Heart right ventricle (tissue), 16 donors: ENCODE measurements at regions of chr18 and their contacts with region 1.

Region 1: DNA sequence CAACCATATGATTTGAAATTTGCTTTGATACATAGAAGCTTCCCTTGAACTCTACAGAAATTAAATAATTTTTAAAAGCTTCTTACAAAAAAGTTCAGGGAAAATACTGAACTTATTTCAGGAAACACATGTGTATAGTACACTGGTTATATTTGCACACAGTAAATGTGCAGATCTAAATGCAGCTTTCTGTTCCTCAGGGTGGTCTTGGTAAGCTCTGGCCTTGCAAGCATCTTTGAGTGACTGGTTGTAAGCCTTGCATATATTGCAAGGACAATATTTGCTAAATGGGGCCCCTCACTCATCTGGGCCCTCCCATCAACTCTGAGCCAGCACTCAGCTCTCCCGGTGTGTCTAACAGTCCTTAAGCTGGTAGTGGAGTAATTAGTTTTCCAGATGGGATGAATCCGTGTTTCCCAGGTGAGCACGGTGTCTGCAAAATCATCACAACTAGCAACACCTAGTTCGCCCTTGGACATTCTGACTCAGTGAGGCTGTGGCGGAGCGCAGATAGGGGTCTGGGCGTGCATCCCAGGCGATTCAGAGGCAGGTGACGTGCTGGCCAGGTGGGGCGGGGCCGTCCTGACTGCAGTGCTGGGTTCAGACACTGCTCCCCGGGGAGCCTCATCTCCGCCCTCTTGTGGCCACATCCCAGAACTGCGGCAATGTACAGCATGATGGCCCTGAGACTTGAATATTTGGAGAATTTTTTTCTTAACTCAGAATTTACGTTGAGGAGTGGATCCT is 149.6 kb downstream of the MBP start:
- DNase-seq: peak; percentile 75 to 85
- ATAC-seq: peak in 7 of 8 donors; percentile 77 to 87 (median 80)
- H3K4me3 ChIP-seq: no peak overlapping the region
- H3K27ac ChIP-seq: no peak overlapping the region
- H3K4me1 ChIP-seq: peaks cover 0 to 20% (median 3%) of the 10 kb centered on the region in 9 donors
- H3K27me3 ChIP-seq: no peaks in the 10 kb centered on the region
- CTCF ChIP-seq: peak; percentile 74 to 97 (median 91)

Region 2: DNA sequence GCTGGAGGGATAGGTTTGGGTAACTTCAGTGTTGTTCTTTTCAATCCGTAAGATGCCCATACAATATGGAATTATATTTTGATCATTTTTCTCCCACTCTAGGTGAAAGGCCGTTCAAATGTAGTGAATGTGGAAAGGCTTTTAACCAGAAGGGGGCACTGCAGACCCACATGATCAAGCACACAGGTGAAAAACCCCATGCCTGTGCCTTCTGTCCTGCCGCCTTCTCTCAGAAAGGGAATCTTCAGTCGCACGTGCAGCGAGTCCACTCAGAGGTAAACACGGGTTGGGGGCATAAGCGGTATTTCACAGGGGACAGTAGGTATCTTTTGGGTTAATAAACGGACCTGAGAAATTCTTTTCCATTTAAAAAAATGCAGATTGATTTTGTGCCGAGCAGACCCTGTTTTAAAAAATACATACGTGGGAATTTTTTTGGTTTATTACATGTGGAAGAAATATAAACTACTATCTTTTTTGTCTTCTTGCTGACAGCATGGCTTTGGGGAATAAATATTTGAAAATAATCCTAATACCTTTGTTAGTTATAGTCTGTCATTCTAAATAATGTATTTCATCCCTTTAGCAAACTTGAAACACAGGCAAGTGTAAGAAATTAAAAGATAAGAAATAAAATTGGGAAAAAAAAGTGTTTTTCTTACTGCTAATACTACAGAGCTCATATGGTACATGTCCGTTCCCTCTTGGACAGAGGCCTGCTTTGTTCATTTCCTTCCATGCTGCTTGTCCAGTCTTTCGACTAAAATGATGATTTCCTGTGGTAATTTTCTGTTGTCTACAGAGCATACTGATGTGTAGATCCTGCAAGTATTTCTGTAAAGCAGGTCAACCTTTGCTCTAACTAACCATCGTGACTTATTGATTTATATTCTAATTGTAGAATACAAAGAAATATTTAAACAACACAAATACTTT is 107.4 kb before region 1 on chr18:
- intact Hi-C with region 1: loop called in 2 of 10 experiments (anchors 5 kb)
- DNase-seq: peak in 1 of 2 donors; percentile 13
- ATAC-seq: peak in 1 of 8 donors; percentile 56
- H3K4me3 ChIP-seq: no peak overlapping the region
- H3K27ac ChIP-seq: no peak overlapping the region
- H3K4me1 ChIP-seq: no peaks in the 10 kb centered on the region
- H3K27me3 ChIP-seq: no peaks in the 10 kb centered on the region
- CTCF ChIP-seq: peak; percentile 17 to 69 (median 63)

Region 3: GRCh38 chr18:76881744-76882143 is 101.3 kb before region 1 on chr18:
- intact Hi-C with region 1: loop called in 2 of 10 experiments (anchors 5 kb)
- DNase-seq: no peak
- ATAC-seq: no peak
- H3K4me3 ChIP-seq: no peak overlapping the region
- H3K27ac ChIP-seq: no peak overlapping the region
- H3K4me1 ChIP-seq: no peaks in the 10 kb centered on the region
- H3K27me3 ChIP-seq: no peaks in the 10 kb centered on the region
- CTCF ChIP-seq: no peak

Region 4: GRCh38 chr18:76953583-76954233 is 29.3 kb before region 1 on chr18:
- intact Hi-C with region 1: no loop called
- DNase-seq: peak; percentile 63 to 75
- ATAC-seq: peak; percentile 41 to 83 (median 74)
- H3K4me3 ChIP-seq: peak overlapping the region in 1 of 10 donors; percentile 17
- H3K27ac ChIP-seq: peak overlapping the region in 1 of 10 donors; percentile 57
- H3K4me1 ChIP-seq: peaks cover 0 to 26% (median 13%) of the 10 kb centered on the region in 9 donors
- H3K27me3 ChIP-seq: no peaks in the 10 kb centered on the region
- CTCF ChIP-seq: no peak